Activated CD4-positive, alpha-beta memory T cell treated with anti-CD3 and anti-CD28 coated beads for 36 hours (primary cell): ENCODE measurements at regions of chr17 and their contacts with region 1.

Region 1: GRCh38 chr17:68398691-68399637 is 58.3 kb downstream of the WIPI1 start:
- DNase-seq: peak; percentile 55
- H3K4me3 Mint-ChIP-seq: peak overlapping the region; percentile 45
- H3K27ac Mint-ChIP-seq: peak overlapping the region; percentile 87
- H3K4me1 Mint-ChIP-seq: peaks cover 37% of the 10 kb centered on the region
- H3K27me3 Mint-ChIP-seq: no peaks in the 10 kb centered on the region

Region 2: DNA sequence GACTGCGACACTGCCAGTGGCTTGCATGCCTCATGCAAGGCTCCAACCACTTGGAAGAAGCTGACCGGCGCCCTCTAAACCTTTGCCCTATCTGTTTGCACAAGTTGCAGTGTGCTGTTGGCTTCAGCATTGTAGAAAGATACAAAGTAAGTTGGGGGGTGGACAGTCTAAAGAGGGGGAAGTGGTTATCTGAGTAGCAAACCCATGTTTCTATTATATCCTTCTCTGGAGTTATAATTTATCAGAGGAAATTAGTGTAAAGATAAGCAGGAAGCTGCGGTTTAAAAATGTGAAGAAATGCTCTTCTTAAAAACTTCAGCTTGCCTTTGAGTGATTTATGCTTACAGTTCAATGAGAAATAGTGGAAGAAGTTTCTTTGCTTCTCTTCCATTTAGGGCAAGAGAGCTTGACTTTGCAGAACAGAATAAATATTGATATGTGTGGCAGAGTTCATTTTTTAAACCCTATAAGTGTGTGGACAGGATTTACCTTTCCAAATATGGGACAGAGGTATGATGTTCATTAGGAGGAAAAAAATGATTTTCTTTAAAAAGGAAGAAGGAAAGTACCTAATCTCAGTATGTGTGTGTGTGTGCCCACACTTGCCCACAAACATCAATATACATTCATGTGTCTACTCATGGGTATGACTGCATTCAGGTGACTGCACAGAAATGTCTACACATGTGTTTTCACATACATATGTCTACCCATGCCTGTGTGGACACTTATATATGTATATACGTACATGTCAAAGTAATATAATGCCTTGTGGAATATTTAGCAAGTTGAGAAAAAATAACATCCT is 143.0 kb before region 1 on chr17:
- CTCF ChIA-PET with region 1: interaction called, 23 read pairs
- POLR2A ChIA-PET with region 1: no interaction called
- intact Hi-C with region 1: no loop called
- DNase-seq: peak; percentile 50
- H3K4me3 Mint-ChIP-seq: peak overlapping the region; percentile 5
- H3K27ac Mint-ChIP-seq: peak overlapping the region; percentile 84
- H3K4me1 Mint-ChIP-seq: peaks cover 84% of the 10 kb centered on the region
- H3K27me3 Mint-ChIP-seq: no peaks in the 10 kb centered on the region

Region 3: GRCh38 chr17:68291844-68292695 is 106.9 kb before region 1 on chr17:
- CTCF ChIA-PET with region 1: interaction called, 15 read pairs
- POLR2A ChIA-PET with region 1: interaction called, 21 read pairs
- intact Hi-C with region 1: loop called (anchors 1 kb)
- DNase-seq: peak; percentile 91
- H3K4me3 Mint-ChIP-seq: peak overlapping the region; percentile 82
- H3K27ac Mint-ChIP-seq: peak overlapping the region; percentile 88
- H3K4me1 Mint-ChIP-seq: peaks cover 63% of the 10 kb centered on the region
- H3K27me3 Mint-ChIP-seq: no peaks in the 10 kb centered on the region

Region 4: GRCh38 chr17:68356520-68356919 is 42.4 kb before region 1 on chr17:
- CTCF ChIA-PET with region 1: interaction called, 7 read pairs
- POLR2A ChIA-PET with region 1: interaction called, 4 read pairs
- intact Hi-C with region 1: loop called (anchors 1 kb)
- DNase-seq: peak; percentile 84
- H3K4me3 Mint-ChIP-seq: peak overlapping the region; percentile 40
- H3K27ac Mint-ChIP-seq: peak overlapping the region; percentile 68
- H3K4me1 Mint-ChIP-seq: peaks cover 54% of the 10 kb centered on the region
- H3K27me3 Mint-ChIP-seq: no peaks in the 10 kb centered on the region

Region 5: GRCh38 chr17:68381076-68381900 is 17.7 kb before region 1 on chr17:
- CTCF ChIA-PET with region 1: interaction called, 13 read pairs
- POLR2A ChIA-PET with region 1: interaction called, 3 read pairs
- intact Hi-C with region 1: no loop called
- DNase-seq: peak; percentile 48
- H3K4me3 Mint-ChIP-seq: no peak overlapping the region
- H3K27ac Mint-ChIP-seq: no peak overlapping the region
- H3K4me1 Mint-ChIP-seq: peaks cover 25% of the 10 kb centered on the region
- H3K27me3 Mint-ChIP-seq: no peaks in the 10 kb centered on the region

Region 6: DNA sequence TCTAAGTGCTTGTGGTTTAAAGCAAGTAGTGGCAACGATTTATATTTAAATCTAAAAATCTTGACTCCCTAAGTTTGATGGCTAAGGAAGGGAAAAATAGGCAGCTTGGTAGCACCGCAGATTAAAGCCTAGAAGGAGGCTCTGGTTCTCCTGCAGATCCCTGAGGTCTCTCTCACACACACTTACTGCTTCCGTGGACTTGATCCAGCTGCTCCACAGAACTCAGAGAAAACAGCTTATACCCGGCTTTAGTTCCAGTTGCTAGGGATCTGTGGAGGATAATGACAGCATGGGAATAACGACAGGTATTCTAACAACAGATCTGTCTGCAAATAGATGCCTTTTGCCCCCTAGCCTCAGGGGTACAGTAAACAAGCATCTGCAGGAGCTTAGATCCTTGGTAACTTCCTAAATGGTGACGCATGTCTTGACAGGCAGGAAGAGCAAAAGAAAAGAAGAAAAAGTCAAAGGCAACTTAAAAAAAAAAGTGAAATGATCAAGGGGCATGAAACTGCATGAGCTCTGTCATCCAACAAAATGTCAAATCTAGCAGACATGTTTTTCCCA is 53.8 kb after region 1 on chr17:
- CTCF ChIA-PET with region 1: no interaction called
- POLR2A ChIA-PET with region 1: no interaction called
- intact Hi-C with region 1: no loop called
- DNase-seq: no peak
- H3K4me3 Mint-ChIP-seq: no peak overlapping the region
- H3K27ac Mint-ChIP-seq: no peak overlapping the region
- H3K4me1 Mint-ChIP-seq: peaks cover 16% of the 10 kb centered on the region
- H3K27me3 Mint-ChIP-seq: no peaks in the 10 kb centered on the region